PC-3 (cell line): ENCODE measurements at regions of chr1 and their contacts with region 1.

Region 1: GRCh38 chr1:8878448-8879347 is at the start of gene ENO1:
- DNase-seq: peak; percentile 97
- ATAC-seq: peak; percentile 62
- H3K4me3 ChIP-seq: peak within 1 kb of the TSS; percentile 95
- H3K27ac ChIP-seq: peak within 1 kb of the TSS; percentile 97
- H3K4me1 ChIP-seq: peaks cover 39% of the 10 kb centered on the region
- H3K27me3 ChIP-seq: no peaks in the 10 kb centered on the region
- CTCF ChIP-seq: no peak
- total RNA-seq, gene ENO1: 3,669 and 3,712 TPM in 2 replicates

Region 2: GRCh38 chr1:8889925-8890785 is 11.5 kb after region 1 on chr1:
- CTCF ChIA-PET with region 1: no interaction called
- POLR2A ChIA-PET with region 1: interaction called, 24 read pairs
- intact Hi-C with region 1: loop called (anchors 1 kb)
- DNase-seq: peak; percentile 83
- ATAC-seq: peak; percentile 97
- H3K4me3 ChIP-seq: peak overlapping the region; percentile 60
- H3K27ac ChIP-seq: peak overlapping the region; percentile 27; the same call in 1 of the 2 replicates
- H3K4me1 ChIP-seq: peaks cover 18% of the 10 kb centered on the region
- H3K27me3 ChIP-seq: no peaks in the 10 kb centered on the region
- CTCF ChIP-seq: no peak